CD4-positive, alpha-beta T cell (primary cell): ENCODE measurements at regions of chr22 and their contacts with region 1.

Region 1: GRCh38 chr22:40238425-40239344 is 61.0 kb downstream of the TNRC6B start:
- DNase-seq: peak in 3 of 14 experiments; percentile 31 to 40 (median 34)
- ATAC-seq: peak; percentile 13
- H3K4me3 ChIP-seq: no peak overlapping the region
- H3K4me3 Mint-ChIP-seq: peak overlapping the region; percentile 64
- H3K27ac ChIP-seq: peak overlapping the region; percentile 7 to 22
- H3K27ac Mint-ChIP-seq: peak overlapping the region; percentile 85
- H3K4me1 ChIP-seq: peaks cover 71% of the 10 kb centered on the region
- H3K4me1 Mint-ChIP-seq: peaks cover 98% of the 10 kb centered on the region
- H3K27me3 ChIP-seq: no peaks in the 10 kb centered on the region
- H3K27me3 Mint-ChIP-seq: no peaks in the 10 kb centered on the region
- CTCF ChIP-seq: no peak

Region 2: GRCh38 chr22:40215266-40215665 is 23.4 kb before region 1 on chr22:
- CTCF ChIA-PET with region 1: interaction called, 3 read pairs
- POLR2A ChIA-PET with region 1: interaction called, 5 read pairs
- intact Hi-C with region 1: loop called in 1 of 2 experiments (anchors 1 kb)
- DNase-seq: peak in 3 of 14 experiments; percentile 36 to 50 (median 49)
- ATAC-seq: no peak
- H3K4me3 ChIP-seq: no peak overlapping the region
- H3K4me3 Mint-ChIP-seq: peak overlapping the region; percentile 71
- H3K27ac ChIP-seq: peak overlapping the region; percentile 50 to 59
- H3K27ac Mint-ChIP-seq: peak overlapping the region; percentile 91
- H3K4me1 ChIP-seq: peaks cover 88% of the 10 kb centered on the region
- H3K4me1 Mint-ChIP-seq: peaks cover 90% of the 10 kb centered on the region
- H3K27me3 ChIP-seq: no peaks in the 10 kb centered on the region
- H3K27me3 Mint-ChIP-seq: no peaks in the 10 kb centered on the region
- CTCF ChIP-seq: no peak

Region 3: GRCh38 chr22:40224702-40225101 is 14.0 kb before region 1 on chr22:
- CTCF ChIA-PET with region 1: interaction called, 10 read pairs
- POLR2A ChIA-PET with region 1: interaction called, 6 read pairs
- intact Hi-C with region 1: no loop called
- DNase-seq: peak in 11 of 14 experiments; percentile 30 to 70 (median 53)
- ATAC-seq: peak; percentile 98
- H3K4me3 ChIP-seq: no peak overlapping the region
- H3K4me3 Mint-ChIP-seq: peak overlapping the region; percentile 69
- H3K27ac ChIP-seq: no peak overlapping the region
- H3K27ac Mint-ChIP-seq: peak overlapping the region; percentile 81
- H3K4me1 ChIP-seq: peaks cover 56% of the 10 kb centered on the region
- H3K4me1 Mint-ChIP-seq: peaks cover 66% of the 10 kb centered on the region
- H3K27me3 ChIP-seq: no peaks in the 10 kb centered on the region
- H3K27me3 Mint-ChIP-seq: no peaks in the 10 kb centered on the region
- CTCF ChIP-seq: no peak